ENCODE measurements at regions of chr5 and their contacts with region 1.

Region 1: DNA sequence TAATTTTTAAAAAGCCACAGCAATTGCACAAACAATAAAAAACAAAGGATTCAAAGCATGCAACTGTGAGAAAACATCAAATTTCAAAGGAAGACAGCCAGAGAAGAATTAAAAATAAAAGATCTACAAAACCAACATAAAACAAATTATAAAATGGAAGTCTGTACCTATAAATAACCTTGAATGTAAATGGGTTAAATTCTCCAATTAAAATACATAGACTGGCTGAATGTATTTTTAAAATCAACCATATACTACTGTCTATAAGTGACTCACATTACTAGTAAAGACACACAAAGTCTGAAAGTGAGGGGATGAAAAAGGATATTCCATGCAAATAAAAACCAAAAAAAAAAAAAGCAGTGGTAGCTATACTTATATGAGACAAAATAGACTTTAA is 33.7 kb downstream of the BTNL8 start:
- DNase-seq: no peak
- H3K4me3 ChIP-seq: no peak overlapping the region
- H3K4me3 Mint-ChIP-seq: no peak overlapping the region
- H3K27ac Mint-ChIP-seq: no peak overlapping the region
- H3K4me1 ChIP-seq: no peaks in the 10 kb centered on the region; the same call in 1 of the 2 replicates
- H3K4me1 Mint-ChIP-seq: peaks cover 6% of the 10 kb centered on the region
- H3K27me3 ChIP-seq: no peaks in the 10 kb centered on the region
- H3K27me3 Mint-ChIP-seq: no peaks in the 10 kb centered on the region
- CTCF ChIP-seq: no peak

Region 2: DNA sequence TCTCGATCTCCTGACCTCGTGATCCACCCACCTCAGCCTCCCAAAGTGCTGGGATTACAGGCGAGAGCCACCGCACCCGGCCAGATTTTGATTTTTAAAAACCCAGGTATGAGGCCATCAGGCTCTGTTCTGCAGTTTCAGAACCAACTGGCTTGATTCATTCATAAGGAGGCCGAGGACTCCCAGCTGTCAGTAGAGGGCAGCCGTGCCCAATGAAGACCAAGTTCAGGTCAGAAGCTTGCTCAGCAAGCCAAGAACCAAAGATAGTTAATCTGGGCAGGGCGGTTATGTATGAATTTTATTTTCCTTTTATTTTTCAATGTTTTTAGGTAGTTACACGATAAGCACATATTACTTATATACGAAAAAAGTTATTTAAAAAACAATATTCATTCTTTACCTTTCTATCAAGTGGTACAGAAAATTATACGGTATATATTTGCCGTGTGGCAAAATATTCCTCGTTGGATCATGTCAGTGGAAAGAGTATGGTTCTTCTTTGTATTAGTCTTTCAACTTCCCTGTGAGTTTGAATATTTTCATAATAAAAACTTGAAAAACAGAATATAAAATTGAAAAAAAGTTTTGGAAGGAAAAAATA is 148.1 kb before region 1 on chr5:
- CTCF ChIA-PET with region 1: no interaction called
- POLR2A ChIA-PET with region 1: no interaction called
- intact Hi-C with region 1: no loop called
- DNase-seq: peak; percentile 78 to 81
- H3K4me3 ChIP-seq: no peak overlapping the region
- H3K4me3 Mint-ChIP-seq: no peak overlapping the region
- H3K27ac Mint-ChIP-seq: no peak overlapping the region
- H3K4me1 ChIP-seq: peaks cover 24% of the 10 kb centered on the region
- H3K4me1 Mint-ChIP-seq: peaks cover 20% of the 10 kb centered on the region
- H3K27me3 ChIP-seq: no peaks in the 10 kb centered on the region
- H3K27me3 Mint-ChIP-seq: no peaks in the 10 kb centered on the region
- CTCF ChIP-seq: peak; percentile 68 to 92

Region 3: DNA sequence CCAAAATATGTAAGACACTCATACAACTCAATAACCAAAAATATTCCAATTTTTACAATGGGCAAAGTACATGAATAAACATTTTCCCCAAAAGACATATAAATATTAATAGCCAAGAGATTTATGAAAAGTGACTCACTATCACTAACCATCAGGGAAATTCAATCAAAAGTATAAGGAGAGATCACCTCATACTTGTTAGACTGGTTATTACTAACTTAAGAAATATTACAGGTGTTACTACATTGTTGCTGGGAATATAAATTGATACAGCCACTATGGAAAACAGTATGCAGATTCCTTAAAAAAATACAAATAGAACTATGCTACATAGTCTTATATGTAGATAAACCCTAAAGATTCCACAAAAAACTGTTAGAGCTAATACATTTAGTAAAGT is 11.9 kb before region 1 on chr5:
- CTCF ChIA-PET with region 1: no interaction called
- POLR2A ChIA-PET with region 1: no interaction called
- intact Hi-C with region 1: loop called (anchors 1 kb)
- DNase-seq: no peak
- H3K4me3 ChIP-seq: no peak overlapping the region
- H3K4me3 Mint-ChIP-seq: no peak overlapping the region
- H3K27ac Mint-ChIP-seq: no peak overlapping the region
- H3K4me1 ChIP-seq: peaks cover 16% of the 10 kb centered on the region; the same call in 1 of the 2 replicates
- H3K4me1 Mint-ChIP-seq: peaks cover 18% of the 10 kb centered on the region
- H3K27me3 ChIP-seq: no peaks in the 10 kb centered on the region
- H3K27me3 Mint-ChIP-seq: no peaks in the 10 kb centered on the region
- CTCF ChIP-seq: no peak

Region 4: DNA sequence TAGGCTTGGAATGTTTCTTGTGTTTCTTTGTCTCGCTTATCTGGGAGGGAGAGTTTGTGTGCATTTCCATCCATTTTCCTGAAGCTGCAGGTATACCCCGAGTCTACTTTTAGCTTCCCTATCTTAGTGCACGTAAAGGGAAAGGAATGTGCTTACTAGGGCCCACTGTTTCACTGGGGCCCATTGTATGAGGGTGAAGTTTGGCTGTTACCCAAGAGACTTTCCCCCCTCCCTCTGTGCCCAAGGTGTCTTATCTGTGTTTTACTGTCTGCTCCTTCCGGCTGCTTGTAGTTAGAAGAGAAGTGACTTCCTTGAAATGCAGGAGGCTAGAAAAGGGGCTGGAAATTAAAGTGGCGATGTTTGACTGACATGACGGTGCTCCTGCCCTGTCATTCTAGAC is 43.9 kb after region 1 on chr5:
- CTCF ChIA-PET with region 1: no interaction called
- POLR2A ChIA-PET with region 1: no interaction called
- intact Hi-C with region 1: no loop called
- DNase-seq: peak; percentile 61 to 82
- H3K4me3 ChIP-seq: no peak overlapping the region
- H3K4me3 Mint-ChIP-seq: peak overlapping the region; percentile 53
- H3K27ac Mint-ChIP-seq: peak overlapping the region; percentile 77
- H3K4me1 ChIP-seq: peaks cover 28% of the 10 kb centered on the region
- H3K4me1 Mint-ChIP-seq: peaks cover 27% of the 10 kb centered on the region
- H3K27me3 ChIP-seq: no peaks in the 10 kb centered on the region
- H3K27me3 Mint-ChIP-seq: no peaks in the 10 kb centered on the region
- CTCF ChIP-seq: no peak

Measured in Caco-2 (cell line).